MCF 10A (cell line): ENCODE measurements at regions of chr1 and their contacts with region 1.

Region 1: DNA sequence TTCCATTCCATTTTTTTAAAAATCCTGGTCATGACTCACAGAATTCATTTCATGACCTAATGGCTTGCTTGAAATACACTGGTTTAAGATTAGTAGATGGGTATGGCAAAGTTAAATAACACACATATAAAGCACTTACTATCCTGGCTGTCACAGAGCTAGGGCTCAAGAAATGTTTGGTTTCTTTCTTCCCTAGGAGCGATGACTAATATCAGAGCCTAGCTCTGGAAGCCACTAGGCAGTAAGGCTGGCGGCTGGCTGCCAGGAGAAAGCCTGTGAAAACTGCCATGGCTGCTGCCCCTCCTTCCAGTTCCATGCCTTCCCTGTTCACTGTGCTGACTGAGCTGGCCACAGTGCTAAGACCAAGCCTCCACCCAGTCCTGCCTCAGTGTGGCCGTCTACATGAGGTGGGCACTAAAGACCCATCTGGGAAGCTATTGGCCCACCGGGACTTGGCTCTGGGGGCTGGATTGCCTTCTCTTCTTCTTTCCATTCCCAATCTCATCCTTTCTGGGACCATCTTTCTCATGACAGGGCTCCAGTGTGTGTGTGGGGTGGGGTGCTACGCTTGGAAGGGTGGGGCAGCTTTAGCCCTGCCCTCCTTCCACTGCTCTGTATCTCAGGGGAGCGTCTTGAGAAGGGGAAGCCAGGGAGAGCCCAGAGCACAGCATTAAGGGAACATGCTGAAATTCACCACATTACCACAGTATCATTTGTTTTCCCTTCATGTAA is 10.8 kb upstream of the ASCL5 start:
- DNase-seq: peak; percentile 78
- H3K4me3 Mint-ChIP-seq: no peak overlapping the region
- H3K27ac Mint-ChIP-seq: no peak overlapping the region
- H3K4me1 Mint-ChIP-seq: peaks cover 11% of the 10 kb centered on the region
- H3K27me3 Mint-ChIP-seq: no peaks in the 10 kb centered on the region
- CTCF ChIP-seq: no peak

Region 2: GRCh38 chr1:200802865-200803512 is 334.8 kb before region 1 on chr1:
- CTCF ChIA-PET with region 1: no interaction called
- POLR2A ChIA-PET with region 1: no interaction called
- intact Hi-C with region 1: no loop called
- DNase-seq: peak; percentile 93
- H3K4me3 Mint-ChIP-seq: no peak overlapping the region
- H3K27ac Mint-ChIP-seq: no peak overlapping the region
- H3K4me1 Mint-ChIP-seq: peaks cover 32% of the 10 kb centered on the region
- H3K27me3 Mint-ChIP-seq: no peaks in the 10 kb centered on the region
- CTCF ChIP-seq: peak; percentile 99

Region 3: DNA sequence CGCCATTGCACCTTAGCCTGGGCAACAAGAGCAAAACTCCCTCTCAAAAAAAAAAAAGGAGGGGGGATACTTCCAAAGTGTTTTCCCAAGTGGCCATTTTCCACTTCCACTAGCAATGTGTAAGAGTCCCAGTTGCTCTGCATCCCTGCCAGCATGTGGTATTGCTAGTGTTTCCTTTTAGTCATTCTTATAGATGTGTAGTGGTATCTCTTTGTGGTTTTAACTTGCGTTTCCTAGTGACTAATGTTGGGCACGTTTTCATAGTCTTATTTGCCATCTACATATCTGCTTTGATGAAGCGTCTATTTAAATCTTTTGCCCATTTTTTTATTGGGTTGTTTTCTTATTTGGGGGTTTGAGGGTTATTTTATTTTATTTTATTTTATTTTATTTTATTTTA is 211.9 kb before region 1 on chr1:
- CTCF ChIA-PET with region 1: no interaction called
- POLR2A ChIA-PET with region 1: no interaction called
- intact Hi-C with region 1: no loop called
- DNase-seq: peak; percentile 74
- H3K4me3 Mint-ChIP-seq: no peak overlapping the region
- H3K27ac Mint-ChIP-seq: no peak overlapping the region
- H3K4me1 Mint-ChIP-seq: peaks cover 6% of the 10 kb centered on the region
- H3K27me3 Mint-ChIP-seq: no peaks in the 10 kb centered on the region
- CTCF ChIP-seq: no peak

Region 4: GRCh38 chr1:201126832-201127754 is 10.7 kb before region 1 on chr1 and contains the start of gene ASCL5:
- CTCF ChIA-PET with region 1: interaction called, 4 read pairs
- POLR2A ChIA-PET with region 1: interaction called, 14 read pairs
- intact Hi-C with region 1: no loop called
- DNase-seq: peak; percentile 73
- H3K4me3 Mint-ChIP-seq: no peak within 1 kb of the TSS
- H3K27ac Mint-ChIP-seq: no peak within 1 kb of the TSS
- H3K4me1 Mint-ChIP-seq: peaks cover 10% of the 10 kb centered on the region
- H3K27me3 Mint-ChIP-seq: peaks cover 13% of the 10 kb centered on the region
- CTCF ChIP-seq: peak; percentile 13
- total RNA-seq, gene ASCL5: not detected in 2 replicates

Region 5: DNA sequence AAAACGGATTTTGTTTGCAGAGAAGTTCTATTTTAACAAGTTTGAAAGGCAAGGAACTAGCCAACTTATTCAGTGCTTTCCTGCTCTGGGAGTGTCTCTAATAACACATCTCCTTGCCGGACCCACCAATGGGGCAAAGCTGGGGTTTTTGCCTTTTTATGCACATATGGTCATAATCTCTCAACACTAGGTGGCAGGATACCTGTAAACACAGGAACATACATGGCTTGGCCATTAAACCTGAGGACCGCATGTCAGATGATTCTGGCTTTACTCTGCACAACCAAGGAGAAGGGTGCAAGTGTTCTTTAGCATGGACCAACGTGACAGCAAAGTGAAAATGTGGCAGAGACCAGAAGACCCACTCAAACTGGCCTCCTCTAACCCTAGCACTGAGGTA is 11.7 kb after region 1 on chr1:
- CTCF ChIA-PET with region 1: interaction called, 47 read pairs
- POLR2A ChIA-PET with region 1: interaction called, 10 read pairs
- intact Hi-C with region 1: no loop called
- DNase-seq: peak; percentile 80
- H3K4me3 Mint-ChIP-seq: no peak overlapping the region
- H3K27ac Mint-ChIP-seq: no peak overlapping the region
- H3K4me1 Mint-ChIP-seq: peaks cover 5% of the 10 kb centered on the region
- H3K27me3 Mint-ChIP-seq: no peaks in the 10 kb centered on the region
- CTCF ChIP-seq: peak; percentile 78

Region 6: GRCh38 chr1:201154389-201155165 is 16.8 kb after region 1 on chr1 and contains the start of gene TMEM9:
- CTCF ChIA-PET with region 1: interaction called, 47 read pairs
- POLR2A ChIA-PET with region 1: interaction called, 10 read pairs
- intact Hi-C with region 1: no loop called
- DNase-seq: peak; percentile 99
- H3K4me3 Mint-ChIP-seq: peak within 1 kb of the TSS; percentile 82
- H3K27ac Mint-ChIP-seq: peak within 1 kb of the TSS; percentile 14
- H3K4me1 Mint-ChIP-seq: peaks cover 5% of the 10 kb centered on the region
- H3K27me3 Mint-ChIP-seq: peaks cover 12% of the 10 kb centered on the region
- CTCF ChIP-seq: no peak
- total RNA-seq, gene TMEM9: 67.2 and 71.7 TPM in 2 replicates

Region 7: GRCh38 chr1:201970334-201971159 is 832.8 kb after region 1 on chr1:
- CTCF ChIA-PET with region 1: no interaction called
- POLR2A ChIA-PET with region 1: no interaction called
- intact Hi-C with region 1: no loop called
- DNase-seq: no peak
- H3K4me3 Mint-ChIP-seq: no peak overlapping the region
- H3K27ac Mint-ChIP-seq: no peak overlapping the region
- H3K4me1 Mint-ChIP-seq: peaks cover 15% of the 10 kb centered on the region
- H3K27me3 Mint-ChIP-seq: peaks cover 8% of the 10 kb centered on the region
- CTCF ChIP-seq: no peak